ENCODE measurements at regions of chr1 and their contacts with region 1.

Region 1: GRCh38 chr1:64966158-64966971 is at the start of gene JAK1:
- DNase-seq: peak; percentile 82 to 91 (median 87)
- H3K4me3 ChIP-seq: peak within 1 kb of the TSS; percentile 37 to 95 (median 74)
- H3K27ac ChIP-seq: peak within 1 kb of the TSS; percentile 56 to 97 (median 94)
- H3K4me1 ChIP-seq: peaks cover 10 to 19% of the 10 kb centered on the region in 2 donors
- H3K27me3 ChIP-seq: no peaks in the 10 kb centered on the region
- CTCF ChIP-seq: peak in 2 of 6 experiments; percentile 8 to 47
- POLR2A ChIP-seq: peak; percentile 86 to 92
- total RNA-seq, gene JAK1: 58.0 to 155 (median 107) TPM

Region 2: DNA sequence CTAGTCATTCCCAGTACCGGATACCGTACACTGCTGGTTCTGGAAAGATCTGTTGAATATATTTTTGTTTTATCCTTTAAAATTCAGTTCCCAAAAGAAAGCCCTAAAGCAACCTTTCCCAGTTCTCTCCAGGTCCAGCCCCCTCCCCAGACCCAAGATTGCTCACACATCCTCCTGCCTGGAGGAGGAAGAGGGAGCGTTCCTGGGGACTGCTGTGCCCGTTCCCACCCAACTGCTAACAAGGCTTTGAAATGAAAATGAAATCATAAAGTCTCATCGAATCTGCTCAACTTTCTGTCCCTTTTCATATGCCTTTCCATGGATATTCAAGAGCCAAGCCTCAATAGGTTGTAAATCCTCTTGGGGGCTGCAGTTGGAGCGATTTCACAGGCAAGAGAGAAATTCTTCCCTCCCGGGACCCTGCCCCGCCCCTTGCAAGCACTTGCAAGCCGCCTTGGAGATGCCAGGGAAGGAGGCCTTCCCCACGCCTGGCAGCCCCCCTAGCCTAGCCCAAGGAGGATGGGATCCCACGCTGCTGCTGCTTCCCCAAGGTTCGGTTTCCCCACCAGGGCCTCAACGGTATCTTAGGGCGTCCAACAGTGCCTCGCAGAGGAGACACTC is 609.6 kb before region 1 on chr1:
- intact Hi-C with region 1: no loop called
- DNase-seq: no peak
- H3K4me3 ChIP-seq: no peak overlapping the region
- H3K27ac ChIP-seq: no peak overlapping the region
- H3K4me1 ChIP-seq: no peaks in the 10 kb centered on the region
- H3K27me3 ChIP-seq: no peaks in the 10 kb centered on the region
- CTCF ChIP-seq: no peak
- POLR2A ChIP-seq: no peak

Region 3: DNA sequence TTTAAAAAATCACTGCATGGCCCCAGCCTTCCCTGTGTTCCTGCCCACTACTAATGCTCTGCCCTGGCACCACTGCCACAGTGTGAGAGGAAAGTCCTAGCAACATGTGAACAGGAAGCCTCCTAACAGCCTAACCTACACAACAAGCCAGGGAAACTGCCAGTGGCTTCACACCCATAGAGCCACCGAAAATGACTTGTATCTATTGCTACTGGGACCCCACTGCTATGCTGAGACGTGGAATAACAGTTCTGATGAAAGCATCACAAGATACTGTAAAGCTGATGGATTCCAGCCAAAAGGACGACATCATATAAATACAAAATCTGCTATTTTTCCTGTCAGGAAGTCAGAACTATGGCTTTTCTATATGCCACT is 74.9 kb before region 1 on chr1:
- intact Hi-C with region 1: loop called (anchors 5 to 10 kb)
- DNase-seq: no peak
- H3K4me3 ChIP-seq: no peak overlapping the region
- H3K27ac ChIP-seq: no peak overlapping the region
- H3K4me1 ChIP-seq: peaks cover 16 to 72% of the 10 kb centered on the region in 2 donors
- H3K27me3 ChIP-seq: no peaks in the 10 kb centered on the region
- CTCF ChIP-seq: no peak
- POLR2A ChIP-seq: no peak

Region 4: DNA sequence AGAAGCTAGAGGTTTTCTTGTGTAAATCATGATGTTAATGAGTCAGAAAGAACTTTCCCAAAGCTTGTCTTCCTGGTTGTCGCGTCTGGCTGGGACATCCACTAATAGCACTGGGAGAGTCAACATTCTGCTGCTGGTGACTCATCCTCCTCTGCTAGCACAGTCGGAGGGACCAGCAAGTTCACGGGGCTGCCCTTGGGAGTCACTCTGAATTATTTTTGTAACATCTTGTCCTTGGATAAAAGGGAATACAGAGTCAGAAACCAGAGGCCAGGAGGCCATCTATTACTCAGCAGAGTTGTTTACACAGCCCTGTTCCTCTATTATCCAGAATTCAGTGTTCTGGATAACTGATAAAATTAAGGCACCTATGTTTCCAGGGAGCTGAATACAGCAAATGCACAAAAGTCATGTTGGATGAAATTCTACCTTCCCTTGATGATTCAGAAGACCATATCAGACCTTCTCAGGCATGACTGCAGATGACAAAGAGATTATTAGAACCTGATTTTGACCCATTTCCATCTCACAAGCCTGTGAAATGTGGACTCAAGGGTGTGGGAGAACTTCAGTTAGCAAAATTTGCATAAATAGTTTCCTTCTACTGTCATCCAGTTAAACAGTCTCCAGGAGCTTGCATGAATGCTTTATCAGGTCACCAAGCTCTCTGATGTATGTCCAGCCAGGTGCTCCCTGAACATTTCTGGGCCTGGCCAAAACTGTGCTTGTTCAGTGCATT is 68.1 kb before region 1 on chr1:
- intact Hi-C with region 1: loop called (anchors 5 to 10 kb)
- DNase-seq: peak; percentile 87 to 97 (median 96)
- H3K4me3 ChIP-seq: no peak overlapping the region
- H3K27ac ChIP-seq: peak overlapping the region in 4 of 5 donors; percentile 71 to 90 (median 85)
- H3K4me1 ChIP-seq: peaks cover 15 to 48% of the 10 kb centered on the region in 2 donors
- H3K27me3 ChIP-seq: no peaks in the 10 kb centered on the region
- CTCF ChIP-seq: no peak
- POLR2A ChIP-seq: peak in 1 of 2 donors; percentile 20